ENCODE measurements at regions of chr5 and their contacts with region 1.

Region 1: GRCh38 chr5:38551030-38552017 is 5.1 kb downstream of the LIFR start:
- DNase-seq: peak; percentile 22
- H3K4me3 Mint-ChIP-seq: no peak overlapping the region
- H3K27ac Mint-ChIP-seq: no peak overlapping the region
- H3K4me1 Mint-ChIP-seq: peaks cover 6% of the 10 kb centered on the region
- H3K27me3 Mint-ChIP-seq: no peaks in the 10 kb centered on the region
- CTCF ChIP-seq: peak; percentile 75

Region 2: GRCh38 chr5:38598994-38599611 is 47.8 kb after region 1 on chr5:
- CTCF ChIA-PET with region 1: interaction called, 3 read pairs
- intact Hi-C with region 1: loop called (anchors 5 kb)
- DNase-seq: peak; percentile 41
- H3K4me3 Mint-ChIP-seq: peak overlapping the region; percentile 32
- H3K27ac Mint-ChIP-seq: peak overlapping the region; percentile 80
- H3K4me1 Mint-ChIP-seq: peaks cover 74% of the 10 kb centered on the region
- H3K27me3 Mint-ChIP-seq: no peaks in the 10 kb centered on the region
- CTCF ChIP-seq: no peak

Region 3: DNA sequence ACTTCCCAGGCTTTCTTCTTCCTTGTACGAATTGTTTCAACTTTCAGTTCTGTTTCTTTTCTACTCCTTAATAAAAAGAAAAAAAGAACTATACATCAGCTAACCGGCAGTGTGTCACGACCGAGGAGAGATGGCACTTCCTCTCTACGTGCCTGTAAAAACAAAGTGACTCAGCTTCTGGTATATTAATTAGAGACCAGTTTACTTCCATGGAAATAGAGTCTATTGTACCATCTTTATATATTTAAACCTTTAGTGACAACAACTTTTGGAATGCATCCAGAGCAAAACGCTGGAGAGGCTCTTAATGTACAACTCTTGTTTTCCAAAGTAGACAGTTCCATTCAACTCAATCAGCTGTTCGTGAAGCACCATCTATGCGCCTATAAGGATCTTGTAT is 99.6 kb after region 1 on chr5:
- CTCF ChIA-PET with region 1: no interaction called
- intact Hi-C with region 1: no loop called
- DNase-seq: no peak
- H3K4me3 Mint-ChIP-seq: peak overlapping the region; percentile 68
- H3K27ac Mint-ChIP-seq: peak overlapping the region; percentile 86
- H3K4me1 Mint-ChIP-seq: peaks cover 32% of the 10 kb centered on the region
- H3K27me3 Mint-ChIP-seq: no peaks in the 10 kb centered on the region
- CTCF ChIP-seq: no peak

Region 4: GRCh38 chr5:38715696-38716095 is 164.4 kb after region 1 on chr5:
- CTCF ChIA-PET with region 1: no interaction called
- intact Hi-C with region 1: no loop called
- DNase-seq: peak; percentile 8
- H3K4me3 Mint-ChIP-seq: no peak overlapping the region
- H3K27ac Mint-ChIP-seq: no peak overlapping the region
- H3K4me1 Mint-ChIP-seq: no peaks in the 10 kb centered on the region
- H3K27me3 Mint-ChIP-seq: peaks cover 55% of the 10 kb centered on the region
- CTCF ChIP-seq: no peak